Activated naive CD4-positive, alpha-beta T cell treated with anti-CD3 and anti-CD28 coated beads for 36 hours (primary cell): ENCODE measurements at regions of chr17 and their contacts with region 1.

Region 1: DNA sequence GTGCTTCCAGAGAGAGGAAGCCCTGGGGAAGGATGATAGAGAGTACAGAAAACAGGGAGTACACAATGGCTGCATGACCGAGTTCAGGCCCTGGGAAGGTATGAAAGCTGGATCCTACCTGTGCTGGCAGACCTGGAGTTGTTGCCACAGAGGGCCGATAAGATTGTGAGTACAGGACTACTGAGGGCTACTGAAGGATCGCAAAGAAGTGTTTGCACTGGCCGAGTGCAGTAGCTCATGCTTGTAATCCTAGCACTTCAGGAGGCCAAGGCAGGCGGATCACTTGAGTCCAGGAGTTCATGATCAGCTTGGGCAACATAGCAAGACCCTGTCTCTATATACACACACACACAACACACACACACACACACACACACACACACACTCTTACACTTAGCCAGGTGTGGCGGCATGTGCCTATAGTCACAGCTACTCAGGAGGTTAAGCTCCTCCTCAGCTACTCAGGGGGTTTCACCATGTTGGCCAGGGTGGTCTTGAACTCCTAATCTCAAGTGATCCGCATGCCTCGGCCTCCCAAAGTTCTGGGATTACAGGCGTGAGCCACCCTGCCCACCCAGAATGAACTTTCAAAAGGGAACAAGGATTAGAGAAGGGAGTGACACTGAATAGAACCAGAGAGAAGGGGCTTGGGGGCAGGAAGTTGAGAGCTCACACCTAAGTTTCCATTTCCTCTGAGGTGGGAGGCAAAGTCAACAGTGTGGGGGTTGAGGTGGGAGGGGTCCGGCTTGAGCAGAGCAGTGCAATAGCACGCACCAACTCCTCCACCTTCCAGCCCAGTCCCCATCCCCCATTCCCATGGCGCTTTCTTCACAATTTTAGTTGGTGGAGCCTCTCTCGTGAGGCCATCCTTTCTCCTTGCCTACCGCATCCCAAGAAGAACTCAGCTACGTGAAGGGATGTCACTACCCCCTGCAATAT is 7.5 kb downstream of the SCIMP start:
- DNase-seq: peak; percentile 33
- H3K4me3 Mint-ChIP-seq: no peak overlapping the region
- H3K27ac Mint-ChIP-seq: no peak overlapping the region
- H3K4me1 Mint-ChIP-seq: peaks cover 17% of the 10 kb centered on the region
- H3K27me3 Mint-ChIP-seq: no peaks in the 10 kb centered on the region

Region 2: GRCh38 chr17:5237541-5238016 is 10.4 kb after region 1 on chr17:
- CTCF ChIA-PET with region 1: interaction called, 22 read pairs
- intact Hi-C with region 1: no loop called
- DNase-seq: peak; percentile 69
- H3K4me3 Mint-ChIP-seq: no peak overlapping the region
- H3K27ac Mint-ChIP-seq: no peak overlapping the region
- H3K4me1 Mint-ChIP-seq: peaks cover 23% of the 10 kb centered on the region
- H3K27me3 Mint-ChIP-seq: no peaks in the 10 kb centered on the region